ENCODE measurements at regions of chr1 and their contacts with region 1.

Region 1: DNA sequence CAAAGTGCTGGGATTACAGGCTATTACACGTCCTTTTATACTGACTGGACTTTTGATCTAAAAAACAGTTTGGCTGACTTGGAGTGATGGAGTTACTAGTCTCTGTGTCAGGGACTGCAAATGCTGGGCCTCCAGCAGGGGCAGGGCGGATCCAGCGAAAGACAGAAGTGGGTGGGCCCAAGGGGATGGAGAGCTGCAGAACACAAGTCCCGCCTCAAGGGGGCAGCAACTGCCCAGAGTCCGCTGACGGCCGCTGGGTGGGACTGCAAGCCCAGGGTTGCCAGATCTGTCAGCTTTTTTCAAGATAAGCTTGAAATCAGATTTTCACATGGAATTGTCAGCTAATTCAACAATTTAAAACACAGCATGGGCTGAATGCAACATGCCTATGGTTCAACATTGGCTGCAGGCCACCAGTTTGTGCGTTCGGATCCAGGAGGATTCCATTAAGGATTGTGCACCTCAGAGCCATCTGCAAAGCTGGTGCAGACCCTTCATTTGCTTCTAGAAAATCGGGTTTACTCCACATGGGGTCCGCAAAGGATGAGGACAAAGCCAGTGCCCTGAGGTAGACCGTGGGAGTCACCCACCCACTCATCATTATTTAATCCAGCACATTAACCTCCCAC is 10.7 kb downstream of the STMN1 start:
- DNase-seq: peak; percentile 94
- ATAC-seq: peak; percentile 81
- H3K4me3 Mint-ChIP-seq: no peak overlapping the region
- H3K27ac Mint-ChIP-seq: peak overlapping the region; percentile 54
- H3K4me1 Mint-ChIP-seq: peaks cover 19% of the 10 kb centered on the region
- H3K27me3 Mint-ChIP-seq: no peaks in the 10 kb centered on the region
- CTCF ChIP-seq: peak; percentile 94

Region 2: GRCh38 chr1:25874934-25875855 is 20.3 kb before region 1 on chr1 and contains the start of gene PAQR7:
- CTCF ChIA-PET with region 1: interaction called, 55 read pairs
- POLR2A ChIA-PET with region 1: interaction called, 16 read pairs
- DNase-seq: peak; percentile 80
- ATAC-seq: peak; percentile 56
- H3K4me3 Mint-ChIP-seq: peak within 1 kb of the TSS; percentile 77
- H3K27ac Mint-ChIP-seq: peak within 1 kb of the TSS; percentile 80
- H3K4me1 Mint-ChIP-seq: peaks cover 24% of the 10 kb centered on the region
- H3K27me3 Mint-ChIP-seq: peaks cover 19% of the 10 kb centered on the region
- CTCF ChIP-seq: no peak
- total RNA-seq, gene PAQR7: 6.7 to 9.1 TPM (median 8.4 TPM) in 3 replicates

Region 3: GRCh38 chr1:25948641-25949040 is 53.2 kb after region 1 on chr1:
- CTCF ChIA-PET with region 1: interaction called, 15 read pairs
- POLR2A ChIA-PET with region 1: no interaction called
- DNase-seq: no peak
- ATAC-seq: no peak
- H3K4me3 Mint-ChIP-seq: no peak overlapping the region
- H3K27ac Mint-ChIP-seq: no peak overlapping the region
- H3K4me1 Mint-ChIP-seq: no peaks in the 10 kb centered on the region
- H3K27me3 Mint-ChIP-seq: no peaks in the 10 kb centered on the region
- CTCF ChIP-seq: no peak

Region 4: GRCh38 chr1:25987951-25988350 is 92.5 kb after region 1 on chr1:
- CTCF ChIA-PET with region 1: interaction called, 15 read pairs
- POLR2A ChIA-PET with region 1: interaction called, 3 read pairs
- DNase-seq: no peak
- ATAC-seq: no peak
- H3K4me3 Mint-ChIP-seq: no peak overlapping the region
- H3K27ac Mint-ChIP-seq: no peak overlapping the region
- H3K4me1 Mint-ChIP-seq: no peaks in the 10 kb centered on the region
- H3K27me3 Mint-ChIP-seq: no peaks in the 10 kb centered on the region
- CTCF ChIP-seq: no peak

Region 5: DNA sequence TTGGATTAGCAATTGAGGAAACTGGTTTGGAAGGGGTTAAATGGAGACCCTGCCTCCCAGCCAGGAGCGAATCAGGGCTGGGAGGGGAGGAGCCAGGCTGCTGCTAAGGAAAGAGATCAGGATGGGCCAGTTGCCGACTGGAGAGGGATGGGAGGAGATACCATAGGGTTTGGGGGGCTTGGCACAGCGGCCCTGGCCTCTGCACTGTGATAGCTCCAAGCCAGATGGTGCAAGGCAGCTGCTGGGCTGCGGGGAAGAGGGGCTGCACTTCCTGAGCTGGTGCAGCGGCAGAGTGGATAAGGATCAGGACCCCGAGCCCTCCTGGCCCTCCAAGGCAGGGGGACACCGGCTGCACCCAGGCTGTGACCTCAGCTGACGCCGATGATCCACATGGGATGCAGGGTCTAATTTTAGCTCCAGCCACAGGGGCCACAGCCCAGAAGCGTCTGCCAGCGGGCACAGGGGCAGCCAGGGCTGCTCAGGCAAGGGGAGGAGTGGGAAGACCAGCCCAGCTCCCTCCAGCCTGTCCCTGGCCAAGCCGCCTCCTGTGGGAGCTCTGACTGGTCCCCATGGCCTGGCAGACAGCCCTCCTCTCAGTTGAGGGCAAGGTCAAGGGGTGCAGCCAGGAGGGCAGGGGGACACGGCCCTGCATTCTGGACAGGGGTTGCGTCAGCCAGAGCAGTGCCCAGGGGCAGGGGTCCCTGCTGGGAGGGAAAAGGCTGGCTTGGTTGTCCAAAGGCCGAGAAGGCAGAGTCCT is 126.3 kb after region 1 on chr1 and contains the start of gene EXTL1:
- CTCF ChIA-PET with region 1: interaction called, 27 read pairs
- POLR2A ChIA-PET with region 1: no interaction called
- DNase-seq: peak; percentile 75
- ATAC-seq: peak; percentile 94
- H3K4me3 Mint-ChIP-seq: peak within 1 kb of the TSS; percentile 92
- H3K27ac Mint-ChIP-seq: peak within 1 kb of the TSS; percentile 95
- H3K4me1 Mint-ChIP-seq: peaks cover 25% of the 10 kb centered on the region
- H3K27me3 Mint-ChIP-seq: no peaks in the 10 kb centered on the region; the same call in 1 of the 2 replicates
- CTCF ChIP-seq: no peak
- total RNA-seq, gene EXTL1: 1.3 to 2.1 TPM (median 1.9 TPM) in 3 replicates

Region 6: DNA sequence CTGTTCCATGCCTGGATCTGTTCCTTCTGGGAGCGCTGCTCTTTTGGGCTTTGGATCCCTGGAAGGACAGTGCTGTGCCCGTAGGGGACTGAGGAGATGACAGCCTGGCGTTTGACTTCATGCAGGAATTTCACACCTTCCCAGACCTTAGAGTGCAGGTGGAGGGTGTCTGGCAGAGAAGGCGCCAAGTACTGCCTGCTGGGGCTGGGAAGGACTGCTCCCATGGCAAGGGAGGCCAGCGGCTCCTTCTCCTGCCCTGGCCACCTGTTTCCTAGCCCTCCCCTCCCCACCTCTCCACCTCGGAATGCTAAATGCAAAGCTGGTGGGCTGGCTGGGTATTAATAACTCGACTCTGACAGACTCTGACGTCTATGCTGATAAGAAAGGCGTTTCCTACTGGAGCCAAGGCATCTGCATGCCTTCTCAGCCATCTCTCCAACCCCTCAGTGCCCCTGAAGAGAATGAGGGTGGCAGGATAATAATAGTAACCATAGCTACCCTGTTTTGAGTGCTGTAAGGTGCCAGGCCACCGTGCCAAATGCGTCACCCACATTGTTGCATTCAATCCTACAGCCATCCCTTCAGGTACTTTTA is 198.7 kb after region 1 on chr1:
- CTCF ChIA-PET with region 1: no interaction called
- POLR2A ChIA-PET with region 1: no interaction called
- DNase-seq: no peak
- ATAC-seq: peak; percentile 19
- H3K4me3 Mint-ChIP-seq: 0 out of 2 replicates have a peak overlapping the region, but pooled peaks have one; percentile 25
- H3K27ac Mint-ChIP-seq: no peak overlapping the region
- H3K4me1 Mint-ChIP-seq: peaks cover 36% of the 10 kb centered on the region
- H3K27me3 Mint-ChIP-seq: peaks cover 5% of the 10 kb centered on the region
- CTCF ChIP-seq: no peak

Region 7: DNA sequence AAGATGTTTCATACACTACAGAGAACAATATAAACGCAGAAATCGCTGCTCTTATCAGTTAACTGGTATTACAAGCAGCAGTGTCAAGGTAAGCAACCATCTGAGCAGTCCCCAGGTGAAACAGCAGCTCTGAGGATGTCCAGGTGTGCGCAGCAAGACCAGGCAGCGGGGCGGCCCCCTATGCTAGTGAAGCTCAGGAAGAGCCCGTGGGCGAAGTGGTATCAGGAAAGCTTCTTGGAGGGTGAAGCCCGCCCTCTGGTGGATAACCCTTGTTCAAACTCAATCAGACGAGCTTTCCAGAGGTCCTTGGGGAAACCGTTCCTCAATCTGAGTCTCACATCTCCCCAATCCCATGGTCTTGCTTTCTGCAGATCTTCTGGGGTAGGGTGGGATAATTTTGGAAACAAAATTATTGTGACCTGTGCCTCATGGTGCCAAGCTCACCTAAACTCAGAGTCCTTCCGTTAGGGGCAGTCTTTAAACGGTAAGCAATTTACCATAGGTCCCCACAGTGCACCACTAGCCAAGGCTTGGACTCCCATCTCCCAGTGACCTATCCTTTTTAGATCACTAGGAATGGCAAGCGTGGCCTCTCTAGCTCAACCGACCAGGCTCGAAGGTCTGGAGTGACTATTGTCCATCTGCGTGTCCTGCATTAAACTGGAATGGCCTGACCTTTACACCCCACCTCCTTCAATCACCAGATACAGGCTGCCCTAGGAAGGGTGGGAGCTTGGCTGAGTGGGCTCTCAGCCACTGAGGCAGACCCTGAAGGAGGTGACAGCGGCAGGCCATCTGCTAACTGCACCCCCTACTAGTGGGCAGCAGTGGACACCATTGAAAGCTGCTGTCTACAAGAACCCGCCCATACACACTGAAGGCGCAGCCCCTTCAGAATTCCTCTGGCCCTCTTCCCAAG is 249.8 kb after region 1 on chr1:
- CTCF ChIA-PET with region 1: interaction called, 11 read pairs
- POLR2A ChIA-PET with region 1: no interaction called
- DNase-seq: peak; percentile 86
- ATAC-seq: peak; percentile 97
- H3K4me3 Mint-ChIP-seq: no peak overlapping the region
- H3K27ac Mint-ChIP-seq: no peak overlapping the region
- H3K4me1 Mint-ChIP-seq: no peaks in the 10 kb centered on the region
- H3K27me3 Mint-ChIP-seq: peaks cover 58% of the 10 kb centered on the region
- CTCF ChIP-seq: peak; percentile 58